K562 (cell line): ENCODE measurements at regions of chr3 and their contacts with region 1.

Region 1: GRCh38 chr3:107522510-107523288 is at the start of gene BBX:
- DNase-seq: peak; percentile 87 to 91 (median 88)
- ATAC-seq: peak; percentile 95
- H3K4me3 ChIP-seq: peak within 1 kb of the TSS; percentile 86
- H3K27ac ChIP-seq: peak within 1 kb of the TSS; percentile 76
- H3K4me1 ChIP-seq: peaks cover 5 to 15% of the 10 kb centered on the region in 2 experiments; a peak in 4 of 5 replicates
- H3K27me3 ChIP-seq: no peaks in the 10 kb centered on the region
- CTCF ChIP-seq: no peak
- EP300 ChIP-seq: no peak
- POLR2A ChIP-seq: peak; percentile 73
- RAD21 ChIP-seq: no peak
- polyA plus RNA-seq, gene BBX: 9.0 to 19.5 TPM

Region 2: GRCh38 chr3:106542101-106542769 is 980.5 kb before region 1 on chr3:
- CTCF ChIA-PET with region 1: no interaction called
- POLR2A ChIA-PET with region 1: no interaction called
- in situ Hi-C with region 1: no loop called
- intact Hi-C with region 1: no loop called
- DNase-seq: no peak
- ATAC-seq: no peak
- H3K4me3 ChIP-seq: no peak overlapping the region
- H3K27ac ChIP-seq: no peak overlapping the region
- H3K4me1 ChIP-seq: no peaks in the 10 kb centered on the region
- H3K27me3 ChIP-seq: no peaks in the 10 kb centered on the region
- CTCF ChIP-seq: no peak
- EP300 ChIP-seq: no peak
- POLR2A ChIP-seq: no peak
- RAD21 ChIP-seq: no peak

Region 3: GRCh38 chr3:107429320-107430181 is 93.1 kb before region 1 on chr3:
- CTCF ChIA-PET with region 1: no interaction called
- POLR2A ChIA-PET with region 1: no interaction called
- in situ Hi-C with region 1: no loop called
- intact Hi-C with region 1: loop called (anchors 5 kb)
- DNase-seq: peak; percentile 58 to 65 (median 61)
- ATAC-seq: peak; percentile 89
- H3K4me3 ChIP-seq: no peak overlapping the region
- H3K27ac ChIP-seq: no peak overlapping the region
- H3K4me1 ChIP-seq: peaks cover 0 to 16% of the 10 kb centered on the region in 2 experiments; a peak in 2 of 5 replicates
- H3K27me3 ChIP-seq: no peaks in the 10 kb centered on the region
- CTCF ChIP-seq: peak; percentile 57 to 68 (median 64)
- EP300 ChIP-seq: no peak
- POLR2A ChIP-seq: no peak
- RAD21 ChIP-seq: peak; percentile 20 to 62; a peak in 3 of 4 replicates